K562 (cell line): ENCODE measurements at regions of chr12 and their contacts with region 1.

Region 1: GRCh38 chr12:122064025-122064777 is 14.4 kb upstream of the MLXIP start:
- DNase-seq: peak; percentile 96 to 99 (median 98)
- ATAC-seq: peak; percentile 97
- H3K4me3 ChIP-seq: peak overlapping the region; percentile 44
- H3K27ac ChIP-seq: peak overlapping the region; percentile 94
- H3K4me1 ChIP-seq: peaks cover 45 to 54% of the 10 kb centered on the region in 2 experiments
- H3K27me3 ChIP-seq: no peaks in the 10 kb centered on the region
- CTCF ChIP-seq: peak; percentile 71 to 88 (median 82)
- EP300 ChIP-seq: peak; percentile 50
- POLR2A ChIP-seq: peak; percentile 81
- RAD21 ChIP-seq: peak; percentile 44 to 62

Region 2: GRCh38 chr12:121773011-121773777 is 291.0 kb before region 1 on chr12:
- CTCF ChIA-PET with region 1: no interaction called
- POLR2A ChIA-PET with region 1: no interaction called
- in situ Hi-C with region 1: no loop called
- intact Hi-C with region 1: no loop called
- DNase-seq: peak; percentile 83 to 87 (median 86)
- ATAC-seq: peak; percentile 88
- H3K4me3 ChIP-seq: no peak overlapping the region
- H3K27ac ChIP-seq: no peak overlapping the region
- H3K4me1 ChIP-seq: peaks cover 14 to 51% of the 10 kb centered on the region in 2 experiments; a peak in 4 of 5 replicates
- H3K27me3 ChIP-seq: no peaks in the 10 kb centered on the region
- CTCF ChIP-seq: peak; percentile 95 to 97 (median 96)
- EP300 ChIP-seq: no peak
- POLR2A ChIP-seq: no peak
- RAD21 ChIP-seq: peak; percentile 94 to 98

Region 3: DNA sequence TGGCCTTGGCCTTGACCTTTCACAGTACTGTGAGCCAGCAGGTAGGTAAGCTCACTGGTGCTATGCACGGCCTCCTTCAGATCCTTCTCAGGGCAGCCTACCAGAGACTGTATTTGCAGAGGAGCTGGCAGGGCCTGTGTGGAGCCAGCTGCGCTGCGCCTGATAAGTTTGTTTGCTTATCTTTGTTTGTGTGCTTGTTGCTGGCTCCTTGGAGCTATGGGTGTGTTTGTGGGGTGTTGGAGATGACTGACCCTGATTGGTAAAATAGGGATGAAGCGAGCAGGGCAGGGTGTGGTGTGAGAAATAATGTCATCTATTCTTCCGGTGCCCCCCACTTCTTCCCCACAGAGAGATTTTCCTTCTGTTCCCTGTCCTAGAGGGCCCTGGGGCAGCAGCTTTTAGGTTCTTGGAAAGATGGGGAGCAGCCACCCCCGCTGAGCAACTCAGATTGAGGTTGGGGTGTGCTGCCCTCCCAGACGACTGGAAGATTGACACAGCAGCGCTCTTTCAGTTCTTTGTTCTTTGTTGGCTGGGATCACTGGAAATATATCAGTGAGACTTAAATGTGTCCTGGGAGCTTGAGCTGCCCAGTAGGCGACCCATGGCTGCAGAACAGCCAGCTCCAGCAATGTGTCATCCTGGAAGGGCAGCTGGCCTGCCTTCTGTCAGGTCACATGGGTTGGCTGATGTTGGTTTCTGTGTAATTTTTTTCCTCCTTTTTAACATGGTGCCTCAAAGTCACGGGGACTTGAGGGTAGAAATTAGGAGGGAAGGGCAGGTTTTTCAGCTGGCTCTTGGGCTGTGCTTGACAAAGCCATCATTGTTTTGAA is 33.9 kb after region 1 on chr12:
- CTCF ChIA-PET with region 1: no interaction called
- POLR2A ChIA-PET with region 1: interaction called, 5 read pairs
- in situ Hi-C with region 1: no loop called
- intact Hi-C with region 1: loop called (anchors 2 kb)
- DNase-seq: peak; percentile 86 to 96 (median 89)
- ATAC-seq: peak; percentile 91
- H3K4me3 ChIP-seq: no peak overlapping the region; the same call in 1 of the 2 replicates
- H3K27ac ChIP-seq: peak overlapping the region; percentile 74
- H3K4me1 ChIP-seq: peaks cover 54 to 66% of the 10 kb centered on the region in 2 experiments
- H3K27me3 ChIP-seq: no peaks in the 10 kb centered on the region
- CTCF ChIP-seq: peak in 1 of 3 experiments; percentile 1; a peak in 1 of 6 replicates
- EP300 ChIP-seq: peak; percentile 97
- POLR2A ChIP-seq: no peak
- RAD21 ChIP-seq: no peak

Region 4: DNA sequence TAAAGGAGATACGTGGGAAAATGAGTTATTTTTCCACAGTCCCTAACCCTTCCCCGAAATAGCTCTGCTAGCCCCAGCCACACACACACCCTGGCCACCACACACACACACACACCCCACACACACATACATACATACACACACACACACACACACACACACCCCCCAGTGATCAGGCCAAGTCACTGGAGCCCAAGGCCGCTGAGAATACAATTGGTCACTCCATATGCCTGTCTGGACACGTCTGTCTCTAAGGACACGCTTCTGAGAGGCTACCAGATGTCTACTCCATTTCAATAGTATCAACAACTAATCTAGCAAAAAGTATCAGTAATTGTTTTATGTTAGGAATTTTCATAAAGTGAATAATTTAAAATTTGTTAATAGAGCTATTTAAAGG is 174.7 kb after region 1 on chr12:
- CTCF ChIA-PET with region 1: no interaction called
- POLR2A ChIA-PET with region 1: no interaction called
- in situ Hi-C with region 1: no loop called
- intact Hi-C with region 1: no loop called
- DNase-seq: no peak
- ATAC-seq: no peak
- H3K4me3 ChIP-seq: no peak overlapping the region
- H3K27ac ChIP-seq: no peak overlapping the region
- H3K4me1 ChIP-seq: no peaks in the 10 kb centered on the region
- H3K27me3 ChIP-seq: no peaks in the 10 kb centered on the region
- CTCF ChIP-seq: no peak
- EP300 ChIP-seq: no peak
- POLR2A ChIP-seq: no peak
- RAD21 ChIP-seq: no peak

Region 5: DNA sequence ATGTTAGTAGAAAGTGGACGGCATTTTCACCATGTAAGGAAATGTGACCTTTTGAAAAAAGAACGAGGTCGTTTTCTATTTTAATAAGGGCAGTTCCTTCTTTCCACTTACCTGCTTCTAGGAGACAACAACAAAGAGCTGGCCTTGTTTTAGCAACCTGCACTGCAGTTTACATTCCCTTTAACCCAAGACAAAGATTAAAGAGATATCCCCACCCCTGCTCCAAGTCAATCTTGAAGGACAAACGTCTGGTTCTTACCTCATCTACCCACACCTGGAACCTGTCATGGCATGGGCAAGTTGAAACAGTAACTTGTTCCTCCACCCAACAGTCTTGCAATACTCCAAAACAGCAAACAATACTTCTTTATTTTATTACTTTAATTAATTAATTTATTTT is 403.8 kb after region 1 on chr12:
- CTCF ChIA-PET with region 1: no interaction called
- POLR2A ChIA-PET with region 1: no interaction called
- in situ Hi-C with region 1: no loop called
- intact Hi-C with region 1: no loop called
- DNase-seq: no peak
- ATAC-seq: no peak
- H3K4me3 ChIP-seq: no peak overlapping the region
- H3K27ac ChIP-seq: no peak overlapping the region
- H3K4me1 ChIP-seq: no peaks in the 10 kb centered on the region; a peak in 1 of 5 replicates
- H3K27me3 ChIP-seq: no peaks in the 10 kb centered on the region
- CTCF ChIP-seq: no peak
- EP300 ChIP-seq: no peak
- POLR2A ChIP-seq: no peak
- RAD21 ChIP-seq: no peak